ENCODE measurements at regions of chr18 and their contacts with region 1.

Region 1: DNA sequence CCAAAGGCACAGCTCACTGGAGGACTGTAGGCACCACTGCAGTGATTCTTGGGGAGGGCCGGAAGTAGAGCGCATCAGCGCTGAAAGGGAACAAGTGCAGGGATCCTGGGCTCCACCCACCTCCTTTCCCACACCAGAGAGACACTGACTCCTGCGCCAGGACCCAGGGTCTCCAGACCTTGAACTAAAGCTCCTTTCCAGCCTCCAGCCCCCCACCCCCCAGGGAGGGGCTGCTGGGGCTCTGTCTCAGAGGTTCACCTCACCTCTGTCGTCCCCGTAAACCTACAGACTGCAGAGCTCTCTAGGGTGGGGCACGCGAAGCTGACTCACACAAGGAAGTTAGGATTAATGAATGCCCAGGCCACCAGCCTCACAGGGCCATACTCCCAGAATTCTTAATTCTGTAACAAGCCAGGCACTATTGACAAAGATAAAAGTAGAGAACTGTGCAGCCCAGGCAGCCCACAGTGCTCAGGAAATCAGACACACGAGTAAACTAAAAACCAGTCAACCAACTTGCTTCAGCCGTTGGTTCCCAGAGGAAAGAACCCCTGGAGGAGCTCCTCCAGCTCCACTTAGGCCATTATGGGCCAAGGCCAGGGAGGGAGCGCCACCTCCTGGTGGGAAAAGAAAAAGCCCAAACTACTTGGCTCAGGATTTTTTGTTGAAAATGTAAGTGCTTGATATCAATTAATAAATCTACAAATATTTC is 45.1 kb upstream of the ACAA2 start:
- DNase-seq: peak; percentile 68
- ATAC-seq: peak; percentile 88
- H3K4me3 ChIP-seq: peak overlapping the region; percentile 26 to 32
- H3K27ac ChIP-seq: peak overlapping the region; percentile 56
- H3K4me1 ChIP-seq: peaks cover 11 to 30% of the 10 kb centered on the region in 2 experiments; a peak in 3 of 4 replicates
- H3K27me3 ChIP-seq: no peaks in the 10 kb centered on the region
- CTCF ChIP-seq: peak in 2 of 3 experiments; percentile 91 to 95; a peak in 4 of 6 replicates
- POLR2A ChIP-seq: no peak
- RAD21 ChIP-seq: no peak

Region 2: DNA sequence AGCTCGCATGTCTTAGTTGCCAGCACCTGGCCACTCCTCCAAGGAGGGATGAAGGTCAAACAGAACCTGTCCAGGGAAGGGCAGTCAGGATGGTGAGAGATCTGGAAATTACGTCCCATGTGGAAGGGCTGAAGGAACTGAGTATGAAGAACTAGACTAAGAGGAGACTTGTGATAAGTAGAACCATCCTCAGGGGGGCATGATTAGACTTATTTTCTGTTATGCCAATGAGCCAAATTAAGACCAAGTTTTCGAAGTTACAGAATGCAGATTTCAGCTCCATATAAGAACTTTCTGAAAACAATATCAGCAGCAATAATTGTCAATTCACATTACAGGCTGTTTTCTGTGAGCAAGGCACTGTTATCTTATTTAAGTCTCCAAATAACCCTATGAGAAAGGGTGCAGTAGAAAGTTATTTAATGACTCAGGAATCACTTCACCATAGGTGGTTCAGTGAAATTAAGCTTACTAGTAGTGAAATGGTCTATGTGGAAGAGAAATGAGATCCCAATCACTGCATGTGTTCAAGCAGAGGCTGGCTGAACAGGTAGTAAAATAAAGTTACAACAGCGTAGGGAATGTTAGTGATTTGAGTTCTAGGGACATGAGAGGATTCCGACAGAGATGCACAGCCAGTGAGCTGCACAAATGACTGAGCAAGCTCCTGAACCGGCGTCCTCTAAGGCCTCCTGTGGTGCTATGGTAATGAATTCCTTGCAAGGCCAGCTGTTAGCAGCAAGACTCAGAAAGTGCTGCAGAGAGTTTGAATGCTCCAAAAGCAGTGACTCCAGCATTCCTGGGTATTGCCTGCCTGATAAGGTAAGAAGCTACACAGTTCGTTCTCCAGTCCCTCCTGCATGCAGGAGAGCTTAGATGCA is 393.5 kb before region 1 on chr18:
- CTCF ChIA-PET with region 1: interaction called, 11 read pairs
- POLR2A ChIA-PET with region 1: no interaction called
- RAD21 ChIA-PET with region 1: interaction called, 3 read pairs
- intact Hi-C with region 1: no loop called
- DNase-seq: no peak
- ATAC-seq: no peak
- H3K4me3 ChIP-seq: no peak overlapping the region
- H3K27ac ChIP-seq: no peak overlapping the region
- H3K4me1 ChIP-seq: peaks cover 4 to 9% of the 10 kb centered on the region in 2 experiments; a peak in 3 of 4 replicates
- H3K27me3 ChIP-seq: no peaks in the 10 kb centered on the region
- CTCF ChIP-seq: peak in 2 of 3 experiments; percentile 15 to 31; a peak in 1 of 6 replicates
- POLR2A ChIP-seq: no peak
- RAD21 ChIP-seq: peak; percentile 54

Region 3: DNA sequence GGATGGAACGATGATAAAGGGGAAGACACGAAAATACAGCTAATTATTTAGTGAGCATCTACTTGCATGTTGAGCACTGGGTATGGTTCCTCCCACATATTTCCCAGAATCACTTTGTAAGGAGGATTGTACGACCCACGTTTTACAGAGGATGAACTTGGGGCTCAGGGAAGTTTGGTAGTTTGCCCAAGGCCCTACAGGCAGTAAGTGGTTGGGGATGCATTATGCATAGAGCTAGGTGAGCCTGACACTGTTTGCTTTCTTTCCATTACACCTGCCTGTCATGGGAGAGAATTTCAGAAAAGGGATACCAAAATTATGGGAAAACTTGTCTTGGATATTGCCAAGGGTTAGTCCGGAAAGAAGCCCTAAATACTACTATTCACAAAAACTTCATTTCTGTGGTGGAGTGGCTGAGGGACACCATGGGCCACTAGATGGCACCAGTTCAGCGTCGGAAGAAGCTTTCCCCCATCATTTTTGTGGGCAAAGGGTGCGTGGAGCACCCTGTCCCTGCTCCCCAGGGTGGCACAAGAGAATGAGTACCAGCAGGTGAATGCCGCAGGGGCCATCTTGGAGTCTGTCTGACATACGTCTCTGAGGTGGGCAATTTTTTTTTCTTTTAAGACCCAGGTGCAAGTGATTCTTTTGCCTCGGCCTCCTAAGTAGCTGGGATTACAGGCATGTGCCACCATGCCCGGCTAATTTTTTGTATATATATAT is 347.9 kb before region 1 on chr18:
- CTCF ChIA-PET with region 1: interaction called, 106 read pairs
- POLR2A ChIA-PET with region 1: interaction called, 8 read pairs
- RAD21 ChIA-PET with region 1: interaction called, 9 to 14 read pairs
- intact Hi-C with region 1: loop called (anchors 1 kb)
- DNase-seq: peak; percentile 73
- ATAC-seq: peak; percentile 97
- H3K4me3 ChIP-seq: no peak overlapping the region
- H3K27ac ChIP-seq: no peak overlapping the region
- H3K4me1 ChIP-seq: no peaks in the 10 kb centered on the region
- H3K27me3 ChIP-seq: no peaks in the 10 kb centered on the region
- CTCF ChIP-seq: peak; percentile 87 to 93 (median 88)
- POLR2A ChIP-seq: no peak
- RAD21 ChIP-seq: peak; percentile 97

Region 4: GRCh38 chr18:49561289-49562193 is 296.9 kb before region 1 on chr18 and contains the start of gene LIPG:
- CTCF ChIA-PET with region 1: interaction called, 16 read pairs
- POLR2A ChIA-PET with region 1: no interaction called
- RAD21 ChIA-PET with region 1: interaction called in 1 of 2 experiments, 3 read pairs
- intact Hi-C with region 1: loop called (anchors 1 kb)
- DNase-seq: peak; percentile 57
- ATAC-seq: peak; percentile 73
- H3K4me3 ChIP-seq: peak within 1 kb of the TSS; percentile 28 to 50
- H3K27ac ChIP-seq: peak within 1 kb of the TSS; percentile 21; the same call in 1 of the 2 replicates
- H3K4me1 ChIP-seq: peaks cover 21 to 38% of the 10 kb centered on the region in 2 experiments
- H3K27me3 ChIP-seq: peaks cover 4% of the 10 kb centered on the region; the same call in 1 of the 2 replicates
- CTCF ChIP-seq: no peak
- POLR2A ChIP-seq: no peak
- RAD21 ChIP-seq: no peak
- total RNA-seq, gene LIPG: 2.6 TPM

Region 5: DNA sequence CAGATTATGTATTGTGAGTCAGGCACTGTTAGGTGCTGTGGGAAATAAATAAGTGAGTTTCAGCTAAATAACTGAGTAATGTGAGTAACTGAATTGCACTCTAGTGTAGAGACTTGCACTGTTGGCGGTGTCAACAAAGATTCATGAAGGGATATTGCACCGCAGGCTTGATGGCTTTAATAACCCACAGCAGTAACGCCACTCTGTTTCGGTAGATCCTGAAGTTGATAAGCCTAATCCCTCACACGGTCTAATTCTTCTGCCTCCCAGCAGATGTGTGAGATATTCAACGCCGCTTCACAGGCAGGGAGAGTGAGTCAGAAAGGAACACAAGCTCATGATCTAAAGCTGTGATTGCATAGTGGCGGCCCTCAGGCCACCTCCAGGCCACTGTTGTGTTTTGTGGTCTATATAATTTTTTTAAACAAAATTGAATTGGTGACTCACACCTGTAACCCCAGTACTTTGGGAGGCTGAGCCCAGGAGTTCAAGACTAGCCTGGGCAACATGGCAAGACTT is 202.3 kb before region 1 on chr18:
- CTCF ChIA-PET with region 1: interaction called, 5 read pairs
- POLR2A ChIA-PET with region 1: no interaction called
- RAD21 ChIA-PET with region 1: no interaction called
- intact Hi-C with region 1: loop called (anchors 10 kb)
- DNase-seq: peak; percentile 97
- ATAC-seq: peak; percentile 95
- H3K4me3 ChIP-seq: no peak overlapping the region
- H3K27ac ChIP-seq: peak overlapping the region; percentile 17; the same call in 1 of the 2 replicates
- H3K4me1 ChIP-seq: peaks cover 17 to 26% of the 10 kb centered on the region in 2 experiments
- H3K27me3 ChIP-seq: peaks cover 57% of the 10 kb centered on the region
- CTCF ChIP-seq: no peak
- POLR2A ChIP-seq: no peak
- RAD21 ChIP-seq: peak; percentile 34; the same call in 1 of the 2 replicates

Region 6: DNA sequence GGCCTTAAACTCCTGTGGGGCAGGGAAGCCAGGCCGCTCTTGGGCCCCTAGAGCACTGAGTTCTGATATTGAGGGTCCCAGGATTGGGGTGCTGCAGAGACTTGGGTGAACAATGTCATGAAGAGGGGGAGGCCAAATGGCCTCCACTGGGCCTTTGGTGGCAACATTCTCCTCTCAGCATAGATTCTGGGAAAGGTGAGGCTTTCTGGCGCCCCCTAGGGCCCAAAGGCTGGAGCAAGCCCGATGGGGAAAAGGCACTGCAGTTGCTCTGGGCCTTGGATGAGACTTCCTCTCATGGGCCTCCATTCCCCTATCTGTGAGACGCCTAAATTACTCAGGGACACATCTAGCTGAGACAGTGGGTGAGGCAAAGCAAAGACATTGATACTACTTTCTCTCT is 129.9 kb before region 1 on chr18:
- CTCF ChIA-PET with region 1: interaction called, 20 read pairs
- POLR2A ChIA-PET with region 1: no interaction called
- RAD21 ChIA-PET with region 1: interaction called in 1 of 2 experiments, 3 read pairs
- intact Hi-C with region 1: no loop called
- DNase-seq: peak; percentile 47
- ATAC-seq: peak; percentile 52
- H3K4me3 ChIP-seq: no peak overlapping the region
- H3K27ac ChIP-seq: no peak overlapping the region; the same call in 1 of the 2 replicates
- H3K4me1 ChIP-seq: peaks cover 34 to 43% of the 10 kb centered on the region in 2 experiments
- H3K27me3 ChIP-seq: no peaks in the 10 kb centered on the region
- CTCF ChIP-seq: peak in 2 of 3 experiments; percentile 84 to 95; a peak in 4 of 6 replicates
- POLR2A ChIP-seq: no peak
- RAD21 ChIP-seq: no peak

Region 7: DNA sequence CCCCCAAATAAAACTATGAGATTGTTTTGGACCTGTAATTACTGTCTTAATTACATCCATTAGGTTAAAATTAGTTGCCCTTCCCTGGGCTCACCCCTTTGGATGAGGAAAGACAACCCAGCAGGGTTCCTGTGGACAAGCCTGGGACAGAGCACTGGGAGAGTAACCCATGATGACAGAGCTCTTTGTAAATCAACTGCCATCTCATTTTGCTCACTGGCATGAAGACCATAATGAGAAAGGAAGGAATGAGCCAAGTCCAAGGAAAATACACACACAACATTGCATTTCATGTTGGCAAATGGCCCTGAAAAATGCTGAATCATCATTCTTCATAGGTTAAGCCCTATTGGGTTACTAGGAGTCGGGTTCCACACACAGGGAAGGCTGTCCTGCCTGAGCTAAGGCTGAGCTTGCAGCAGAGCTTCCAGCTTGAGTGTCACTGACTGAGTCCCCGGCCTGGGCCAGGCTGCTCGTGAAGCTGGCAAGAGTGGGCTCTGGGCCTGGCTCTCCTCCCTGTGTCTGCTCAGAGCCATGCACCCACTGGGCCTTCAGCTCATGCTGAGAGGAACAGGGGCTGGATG is 49.0 kb after region 1 on chr18:
- CTCF ChIA-PET with region 1: no interaction called
- POLR2A ChIA-PET with region 1: no interaction called
- RAD21 ChIA-PET with region 1: no interaction called
- intact Hi-C with region 1: no loop called
- DNase-seq: no peak
- ATAC-seq: no peak
- H3K4me3 ChIP-seq: no peak overlapping the region
- H3K27ac ChIP-seq: no peak overlapping the region
- H3K4me1 ChIP-seq: no peaks in the 10 kb centered on the region
- H3K27me3 ChIP-seq: no peaks in the 10 kb centered on the region
- CTCF ChIP-seq: no peak
- POLR2A ChIP-seq: no peak
- RAD21 ChIP-seq: no peak